Activated T-helper 2 cell treated with anti-CD3 and anti-CD28 coated beads, Interferon-gamma antibody, Interleukin-2, Interleukin-4, amounts not matched to agents 10 μg/mL and 5 μg/mL and 100 μg/mL, durations not matched to agents 14 hours and 24 hours and 36 hours (primary cell): ENCODE measurements at regions of chr7 and their contacts with region 1.

Region 1: GRCh38 chr7:5704534-5704922 is 76.9 kb downstream of the RNF216 start:
- DNase-seq: peak; percentile 60
- H3K4me3 Mint-ChIP-seq: no peak overlapping the region
- H3K27ac Mint-ChIP-seq: no peak overlapping the region
- H3K4me1 Mint-ChIP-seq: peaks cover 50% of the 10 kb centered on the region
- H3K27me3 Mint-ChIP-seq: no peaks in the 10 kb centered on the region

Region 2: DNA sequence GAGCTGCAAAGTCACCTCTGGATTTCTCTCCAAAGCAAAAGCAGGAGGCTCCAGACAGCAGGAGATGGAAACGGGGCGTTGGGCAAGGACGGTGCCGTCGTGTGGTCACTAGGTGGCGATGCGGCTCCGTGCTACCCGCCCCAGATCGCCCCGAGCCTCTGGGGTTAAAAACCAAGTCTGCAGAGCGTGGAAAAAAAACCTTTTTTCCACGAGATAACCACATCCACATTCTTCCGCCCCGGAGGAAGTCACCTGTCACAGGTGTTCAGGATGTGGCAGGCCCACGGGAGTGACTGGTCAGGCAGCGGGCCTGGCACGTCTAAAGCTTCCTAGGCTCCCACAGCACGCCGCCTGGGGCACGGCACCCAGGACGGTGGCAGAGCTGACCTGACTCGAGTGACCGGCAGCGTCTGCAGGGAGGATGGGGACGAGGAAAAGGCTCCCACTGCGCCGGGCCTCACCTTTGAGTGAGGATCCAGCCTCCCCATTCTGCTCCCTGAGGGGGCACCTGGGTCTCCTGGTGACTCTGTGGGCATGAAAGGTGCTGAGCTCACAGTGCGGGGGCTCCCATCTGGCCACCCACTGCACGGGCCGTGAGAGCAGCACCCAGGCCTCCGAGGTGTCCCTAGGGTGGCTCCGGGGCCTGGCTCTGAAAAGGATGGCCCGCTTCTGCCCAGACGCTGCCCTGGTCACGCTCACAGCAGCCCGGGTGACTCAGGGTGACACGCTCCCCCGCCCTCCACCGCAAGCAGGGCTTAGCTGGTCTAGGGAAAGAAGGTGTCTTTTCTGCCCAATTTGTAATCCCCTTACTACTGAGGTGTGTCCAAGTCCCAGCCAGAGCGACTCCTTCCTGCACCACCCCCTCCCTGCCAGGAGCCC is 209.6 kb before region 1 on chr7:
- intact Hi-C with region 1: loop called (anchors 2 kb)
- DNase-seq: peak; percentile 70
- H3K4me3 Mint-ChIP-seq: no peak overlapping the region
- H3K27ac Mint-ChIP-seq: no peak overlapping the region
- H3K4me1 Mint-ChIP-seq: peaks cover 17% of the 10 kb centered on the region
- H3K27me3 Mint-ChIP-seq: no peaks in the 10 kb centered on the region

Region 3: DNA sequence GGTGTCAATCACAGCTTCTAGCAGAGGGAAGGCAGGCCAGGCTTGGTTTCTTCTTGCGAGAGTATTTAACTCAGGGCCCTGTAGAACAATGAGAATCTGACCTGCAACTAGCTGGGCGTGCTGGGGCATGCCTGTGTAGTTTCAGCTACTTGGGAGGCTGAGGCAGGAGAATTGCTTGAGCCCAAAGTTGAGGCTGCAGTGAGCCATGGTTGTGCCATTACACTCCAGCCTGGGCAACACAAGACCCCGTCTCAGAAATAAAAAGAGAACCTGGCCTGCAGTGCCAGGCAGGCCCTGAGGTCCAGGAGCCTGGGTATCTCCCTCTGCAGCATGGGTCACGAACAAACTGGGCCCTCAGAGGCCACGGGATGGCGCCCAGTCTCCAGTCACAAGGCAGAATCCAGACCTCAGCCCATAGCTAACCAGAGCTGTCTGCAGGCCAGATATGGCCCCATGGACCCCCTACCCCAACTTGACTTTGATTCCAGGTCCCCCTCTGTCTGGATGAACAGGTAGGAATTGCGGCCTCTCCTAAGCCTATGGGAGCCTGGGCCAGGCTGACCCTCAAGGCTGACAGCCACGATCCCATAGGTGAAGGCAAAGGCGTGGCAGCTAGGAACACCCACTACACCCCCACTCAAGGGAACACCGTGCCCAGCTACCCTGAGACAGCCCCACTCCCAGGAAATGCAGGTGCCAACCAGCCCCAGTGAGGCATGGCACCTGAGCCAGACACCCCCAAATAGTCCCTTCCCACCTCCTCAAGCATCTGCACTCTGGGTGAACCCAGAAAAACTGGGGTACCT is 178.2 kb before region 1 on chr7:
- intact Hi-C with region 1: no loop called
- DNase-seq: no peak
- H3K4me3 Mint-ChIP-seq: peak overlapping the region; percentile 99
- H3K27ac Mint-ChIP-seq: peak overlapping the region; percentile 92
- H3K4me1 Mint-ChIP-seq: peaks cover 14% of the 10 kb centered on the region
- H3K27me3 Mint-ChIP-seq: no peaks in the 10 kb centered on the region

Region 4: DNA sequence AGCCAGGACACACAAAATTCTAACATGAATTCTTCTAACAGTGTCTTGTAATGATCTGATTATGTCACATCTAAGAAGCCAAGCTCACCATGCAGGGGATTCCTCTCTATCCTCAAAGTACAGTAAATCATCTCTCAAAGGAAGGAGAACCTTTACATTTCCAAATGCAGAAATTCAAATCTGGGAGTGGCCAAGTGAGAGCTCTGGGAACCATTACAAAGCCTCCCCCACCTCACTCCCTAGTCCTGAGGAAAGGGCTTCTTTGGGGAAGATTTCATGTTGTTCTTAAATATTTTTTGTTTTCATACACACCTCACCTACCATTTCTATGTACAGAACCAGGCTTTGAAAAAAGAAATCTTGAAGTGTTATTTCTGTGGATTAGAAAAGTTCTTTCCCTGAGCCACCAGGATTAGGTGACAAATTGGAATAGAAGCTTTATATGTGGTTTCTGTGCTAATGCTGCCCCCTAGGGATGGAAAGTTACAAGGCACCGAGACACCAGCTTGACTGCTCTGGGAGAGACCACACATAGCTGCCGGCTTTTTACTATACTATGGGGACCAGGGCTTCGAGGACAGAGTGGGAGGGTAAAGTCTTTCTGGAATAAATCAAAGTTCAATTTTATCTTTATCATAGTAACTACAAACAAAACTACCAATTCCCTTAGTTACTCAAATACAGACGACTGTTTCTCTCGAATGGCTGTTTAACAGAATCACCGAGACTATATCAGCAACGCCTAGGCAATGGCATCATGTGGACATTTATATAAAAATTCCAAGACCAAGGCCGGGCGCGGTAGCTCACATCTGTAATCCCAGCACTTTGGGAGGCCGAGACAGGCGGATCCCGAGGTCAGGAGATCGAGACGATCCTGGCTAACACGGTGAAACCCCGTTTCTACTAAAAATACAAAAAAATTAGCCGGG is 39.2 kb before region 1 on chr7:
- intact Hi-C with region 1: loop called (anchors 1 kb)
- DNase-seq: peak; percentile 48
- H3K4me3 Mint-ChIP-seq: no peak overlapping the region
- H3K27ac Mint-ChIP-seq: no peak overlapping the region
- H3K4me1 Mint-ChIP-seq: peaks cover 24% of the 10 kb centered on the region
- H3K27me3 Mint-ChIP-seq: no peaks in the 10 kb centered on the region

Region 5: DNA sequence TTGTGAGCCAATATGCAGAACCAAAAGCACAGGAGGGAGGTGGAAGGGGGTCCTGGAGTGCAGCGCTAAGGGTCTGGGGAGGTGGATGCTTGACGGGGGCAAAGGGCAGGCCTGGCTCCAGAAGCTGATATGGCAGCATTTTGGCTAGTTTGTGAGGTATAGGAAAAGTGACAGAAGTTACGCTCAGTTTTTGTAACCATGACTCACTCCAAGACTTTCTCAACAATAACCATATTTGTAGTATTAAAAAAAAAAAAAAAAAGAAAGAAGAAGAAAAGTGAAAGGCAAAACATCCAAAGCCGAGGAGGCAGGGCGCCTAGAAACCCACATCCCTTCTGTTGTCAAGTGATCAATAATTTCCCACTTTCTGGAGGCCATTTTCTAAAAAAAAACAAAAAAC is 15.4 kb before region 1 on chr7:
- intact Hi-C with region 1: loop called (anchors 1 kb)
- DNase-seq: peak; percentile 60
- H3K4me3 Mint-ChIP-seq: peak overlapping the region; percentile 16
- H3K27ac Mint-ChIP-seq: peak overlapping the region; percentile 76
- H3K4me1 Mint-ChIP-seq: peaks cover 65% of the 10 kb centered on the region
- H3K27me3 Mint-ChIP-seq: no peaks in the 10 kb centered on the region